ENCODE measurements at regions of chr15 and their contacts with region 1.

Region 1: GRCh38 chr15:60362321-60363086 is 35.3 kb downstream of the ANXA2 start:
- DNase-seq: no peak
- ATAC-seq: no peak
- H3K4me3 ChIP-seq: no peak overlapping the region
- H3K27ac ChIP-seq: no peak overlapping the region
- H3K4me1 ChIP-seq: no peaks in the 10 kb centered on the region
- H3K27me3 ChIP-seq: no peaks in the 10 kb centered on the region
- CTCF ChIP-seq: no peak
- EP300 ChIP-seq: no peak
- POLR2A ChIP-seq: no peak
- RAD21 ChIP-seq: no peak

Region 2: DNA sequence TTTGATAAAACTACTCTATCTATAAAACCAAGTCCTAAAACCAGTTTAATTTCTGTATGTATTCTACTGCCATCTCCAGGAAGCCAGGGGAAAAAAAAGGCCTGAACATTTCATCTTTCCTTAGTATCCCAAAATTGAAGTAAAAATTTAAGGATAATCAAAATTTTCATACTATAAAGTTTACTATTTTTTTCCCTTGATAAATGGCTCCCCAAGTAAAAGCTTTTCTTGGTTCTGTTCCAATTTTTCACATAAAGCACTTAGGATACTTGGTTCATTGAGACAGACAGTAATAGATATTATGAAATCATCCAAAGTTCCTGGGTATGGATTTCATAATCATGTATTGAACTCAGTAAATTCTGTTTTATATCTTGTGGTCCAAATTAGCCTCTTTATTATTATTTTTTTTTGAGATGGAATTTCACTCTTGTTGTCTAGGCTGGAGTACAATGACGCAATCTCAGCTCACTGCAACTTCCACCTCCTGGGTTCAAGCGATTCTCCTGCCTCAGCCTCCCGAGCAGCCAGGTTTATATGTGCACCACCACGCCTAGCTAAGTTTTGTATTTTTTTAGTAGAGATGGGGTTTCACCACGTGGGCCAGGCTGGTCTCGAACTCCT is 81.9 kb after region 1 on chr15:
- CTCF ChIA-PET with region 1: interaction called, 19 read pairs
- POLR2A ChIA-PET with region 1: no interaction called
- RAD21 ChIA-PET with region 1: interaction called, 44 read pairs
- SMC1A ChIA-PET with region 1: interaction called, 10 read pairs
- in situ Hi-C with region 1: no loop called
- intact Hi-C with region 1: loop called (anchors 5 kb)
- DNase-seq: no peak
- ATAC-seq: no peak
- H3K4me3 ChIP-seq: no peak overlapping the region
- H3K27ac ChIP-seq: no peak overlapping the region
- H3K4me1 ChIP-seq: no peaks in the 10 kb centered on the region
- H3K27me3 ChIP-seq: no peaks in the 10 kb centered on the region
- CTCF ChIP-seq: no peak; a peak in 1 of 6 replicates
- EP300 ChIP-seq: no peak
- POLR2A ChIP-seq: no peak
- RAD21 ChIP-seq: no peak

Region 3: DNA sequence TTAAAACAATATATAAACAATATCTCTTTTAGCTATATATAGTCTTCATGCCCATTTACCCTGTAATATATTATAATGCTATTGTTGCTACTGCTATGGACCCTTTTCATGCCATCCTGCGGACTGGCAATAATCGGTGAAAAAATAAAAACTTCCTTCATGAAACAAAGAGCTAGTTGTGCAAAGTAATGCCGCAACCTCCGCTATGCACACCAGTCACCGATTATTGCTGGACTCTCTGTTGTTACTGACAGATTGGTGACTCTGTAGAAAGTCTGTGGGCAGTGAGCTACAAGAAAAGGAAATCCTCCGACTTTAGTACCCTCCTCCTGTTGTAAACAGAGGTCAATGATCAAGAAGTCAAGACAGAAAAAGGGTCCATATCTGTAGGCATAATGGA is 134.3 kb after region 1 on chr15:
- CTCF ChIA-PET with region 1: interaction called, 21 read pairs
- POLR2A ChIA-PET with region 1: no interaction called
- RAD21 ChIA-PET with region 1: interaction called, 6 read pairs
- SMC1A ChIA-PET with region 1: interaction called, 10 read pairs
- in situ Hi-C with region 1: no loop called
- intact Hi-C with region 1: no loop called
- DNase-seq: no peak
- ATAC-seq: no peak
- H3K4me3 ChIP-seq: no peak overlapping the region
- H3K27ac ChIP-seq: no peak overlapping the region
- H3K4me1 ChIP-seq: no peaks in the 10 kb centered on the region
- H3K27me3 ChIP-seq: no peaks in the 10 kb centered on the region
- CTCF ChIP-seq: no peak
- EP300 ChIP-seq: no peak
- POLR2A ChIP-seq: no peak
- RAD21 ChIP-seq: no peak

Region 4: DNA sequence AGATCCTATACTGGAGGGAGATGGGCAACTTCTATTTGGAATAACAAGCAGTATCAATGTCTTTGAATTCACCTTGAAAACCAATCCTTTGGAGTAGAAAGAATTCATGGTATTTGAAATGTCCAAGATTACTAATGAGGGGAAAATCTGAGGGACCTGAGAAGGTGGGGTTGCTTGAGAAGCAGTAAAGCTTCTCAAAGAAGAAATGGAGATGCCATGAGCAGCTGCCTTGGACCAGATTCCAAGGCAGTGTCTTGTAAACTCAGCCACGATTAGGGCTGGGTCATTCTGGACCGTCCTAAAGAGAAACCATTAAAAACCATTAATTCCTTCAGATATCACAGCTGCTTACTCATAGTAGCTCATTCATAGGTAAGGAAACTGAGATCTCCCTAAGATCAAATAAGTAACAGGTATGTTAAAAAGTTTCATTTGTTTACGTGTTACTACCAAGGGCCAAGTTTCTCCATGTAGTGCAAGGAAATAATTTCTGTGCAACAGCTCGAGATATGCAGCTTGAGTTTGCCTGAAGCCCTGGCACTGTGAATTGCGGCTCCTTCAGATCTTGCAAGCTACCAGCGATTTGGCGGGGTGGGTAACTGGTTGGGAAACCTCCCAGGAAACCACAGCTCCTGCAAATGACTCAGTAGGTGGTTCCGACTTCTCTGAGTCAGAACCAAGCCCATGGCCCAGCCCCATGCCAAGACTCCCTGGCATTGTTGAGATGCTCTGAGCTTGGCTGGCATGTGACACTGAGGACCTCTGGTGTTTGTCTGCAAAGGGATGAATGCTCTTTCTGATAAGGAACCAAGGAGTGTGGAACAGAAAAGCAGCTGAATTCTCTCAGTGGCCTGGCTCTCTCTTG is 569.8 kb after region 1 on chr15:
- CTCF ChIA-PET with region 1: interaction called, 5 read pairs
- POLR2A ChIA-PET with region 1: no interaction called
- RAD21 ChIA-PET with region 1: interaction called, 6 read pairs
- SMC1A ChIA-PET with region 1: no interaction called
- in situ Hi-C with region 1: loop called (anchors 10 kb)
- intact Hi-C with region 1: no loop called
- DNase-seq: no peak
- ATAC-seq: peak; percentile 66
- H3K4me3 ChIP-seq: no peak overlapping the region
- H3K27ac ChIP-seq: no peak overlapping the region
- H3K4me1 ChIP-seq: no peaks in the 10 kb centered on the region
- H3K27me3 ChIP-seq: peaks cover 0 to 4% of the 10 kb centered on the region in 2 experiments; a peak in 2 of 4 replicates
- CTCF ChIP-seq: peak; percentile 25 to 44 (median 34); a peak in 5 of 6 replicates
- EP300 ChIP-seq: no peak
- POLR2A ChIP-seq: no peak
- RAD21 ChIP-seq: peak; percentile 72

Region 5: GRCh38 chr15:61834076-61834697 is 1471.7 kb after region 1 on chr15:
- CTCF ChIA-PET with region 1: interaction called, 12 read pairs
- POLR2A ChIA-PET with region 1: no interaction called
- RAD21 ChIA-PET with region 1: interaction called, 4 read pairs
- SMC1A ChIA-PET with region 1: interaction called, 6 read pairs
- in situ Hi-C with region 1: loop called (anchors 25 kb)
- intact Hi-C with region 1: no loop called
- DNase-seq: no peak
- ATAC-seq: peak; percentile 88
- H3K4me3 ChIP-seq: no peak overlapping the region
- H3K27ac ChIP-seq: no peak overlapping the region
- H3K4me1 ChIP-seq: no peaks in the 10 kb centered on the region
- H3K27me3 ChIP-seq: no peaks in the 10 kb centered on the region; a peak in 2 of 4 replicates
- CTCF ChIP-seq: peak; percentile 94 to 96 (median 96)
- EP300 ChIP-seq: no peak
- POLR2A ChIP-seq: no peak
- RAD21 ChIP-seq: peak; percentile 82